ENCODE measurements at regions of chr2 and their contacts with region 1.

Region 1: DNA sequence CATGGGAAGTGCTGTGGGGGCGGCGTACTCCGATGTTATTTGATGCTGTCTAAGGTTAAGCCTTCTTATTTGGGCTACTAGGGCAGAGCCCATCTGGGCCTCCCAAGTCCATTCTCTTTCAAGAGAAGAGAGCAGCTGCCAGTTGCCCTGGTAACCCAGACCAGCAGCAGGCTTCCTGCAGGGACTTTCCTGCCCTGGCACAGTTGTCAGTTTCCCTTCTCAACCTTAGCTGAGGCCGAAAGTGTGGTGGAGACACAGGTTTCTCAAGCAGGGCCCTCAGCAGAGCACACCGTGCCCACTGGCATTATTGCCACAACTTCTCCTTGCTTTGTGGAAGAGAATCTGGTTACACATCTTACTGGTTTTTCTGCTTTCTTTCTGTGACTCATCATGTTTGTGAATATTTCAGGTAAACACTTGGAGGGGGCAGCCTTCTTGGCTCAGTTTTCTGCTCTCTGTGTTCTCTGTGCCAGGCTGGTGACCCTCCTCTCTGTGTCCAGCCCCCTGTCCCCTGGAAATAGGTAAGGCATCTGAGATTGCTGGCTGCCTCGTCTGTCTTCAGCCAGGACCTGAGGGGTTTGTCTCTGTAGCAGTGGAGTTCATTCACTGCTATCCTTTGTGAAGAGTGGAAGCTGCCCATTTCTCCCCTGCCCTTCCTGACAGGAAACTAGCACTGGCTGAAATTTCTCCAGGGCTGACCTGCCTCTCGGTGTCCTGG is 111.0 kb downstream of the B3GNT2 start:
- DNase-seq: peak; percentile 25
- H3K4me3 Mint-ChIP-seq: no peak overlapping the region
- H3K27ac Mint-ChIP-seq: peak overlapping the region; percentile 88
- H3K4me1 Mint-ChIP-seq: peaks cover 78% of the 10 kb centered on the region
- H3K27me3 Mint-ChIP-seq: peaks cover 2% of the 10 kb centered on the region

Region 2: DNA sequence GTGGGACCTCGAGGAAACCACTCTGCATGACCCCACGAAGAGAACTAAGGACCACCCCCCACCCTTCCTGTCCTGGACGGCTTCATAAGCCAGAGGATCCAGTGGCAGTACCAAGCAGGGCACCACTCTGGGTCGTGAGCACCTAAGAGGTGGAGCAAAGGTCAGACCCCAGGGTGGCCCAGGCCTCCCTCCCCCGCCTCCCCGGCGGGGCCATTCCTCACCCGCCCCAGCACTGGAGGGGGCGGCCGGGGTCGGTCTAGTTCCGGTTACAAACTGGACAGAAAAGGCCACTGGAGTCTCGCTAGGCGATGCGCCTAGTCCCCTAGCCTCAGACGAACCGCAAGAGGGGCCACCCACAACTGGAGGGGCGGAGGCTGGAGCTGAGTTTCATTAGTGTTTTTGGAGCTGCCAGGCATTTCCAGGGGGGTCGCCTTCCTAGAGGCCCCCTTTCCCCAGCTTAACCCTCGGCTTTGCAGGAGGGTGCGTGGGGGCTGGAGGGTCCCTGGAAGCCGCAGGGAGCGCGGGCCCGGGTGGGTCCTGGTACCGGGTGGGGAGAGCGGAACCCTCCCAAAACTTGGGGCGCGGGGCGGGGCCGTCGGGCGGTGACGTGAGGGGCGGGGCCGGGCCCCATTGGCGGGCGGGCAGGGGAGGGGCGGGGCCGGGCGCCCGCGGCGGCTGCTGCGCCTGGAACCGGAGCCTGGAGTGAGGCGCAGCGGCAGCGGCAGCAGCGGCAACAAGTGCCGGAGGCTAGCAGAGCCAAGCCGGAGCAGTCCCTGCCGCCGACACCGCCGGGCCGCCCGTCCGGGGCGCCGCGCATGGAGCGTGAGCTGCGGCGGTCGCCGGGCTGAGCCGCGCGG is 111.3 kb before region 1 on chr2 and contains the start of gene B3GNT2:
- intact Hi-C with region 1: loop called (anchors 1 kb)
- DNase-seq: peak; percentile 74
- H3K4me3 Mint-ChIP-seq: peak within 1 kb of the TSS; percentile 90
- H3K27ac Mint-ChIP-seq: peak within 1 kb of the TSS; percentile 91
- H3K4me1 Mint-ChIP-seq: peaks cover 32% of the 10 kb centered on the region
- H3K27me3 Mint-ChIP-seq: peaks cover 11% of the 10 kb centered on the region
- total RNA-seq, gene B3GNT2: 29.0 and 29.3 TPM in 2 replicates

Region 3: GRCh38 chr2:62321380-62322289 is 14.7 kb after region 1 on chr2:
- intact Hi-C with region 1: loop called (anchors 2 kb)
- DNase-seq: no peak
- H3K4me3 Mint-ChIP-seq: no peak overlapping the region
- H3K27ac Mint-ChIP-seq: no peak overlapping the region
- H3K4me1 Mint-ChIP-seq: peaks cover 18% of the 10 kb centered on the region
- H3K27me3 Mint-ChIP-seq: no peaks in the 10 kb centered on the region

Measured in activated T-helper 2 cell treated with anti-CD3 and anti-CD28 coated beads, Interferon-gamma antibody, Interleukin-2, Interleukin-4, amounts not matched to agents 10 μg/mL and 5 μg/mL and 100 μg/mL, durations not matched to agents 14 hours and 24 hours and 36 hours (primary cell).